Natural killer cell (primary cell): ENCODE measurements at regions of chr20 and their contacts with region 1.

Region 1: DNA sequence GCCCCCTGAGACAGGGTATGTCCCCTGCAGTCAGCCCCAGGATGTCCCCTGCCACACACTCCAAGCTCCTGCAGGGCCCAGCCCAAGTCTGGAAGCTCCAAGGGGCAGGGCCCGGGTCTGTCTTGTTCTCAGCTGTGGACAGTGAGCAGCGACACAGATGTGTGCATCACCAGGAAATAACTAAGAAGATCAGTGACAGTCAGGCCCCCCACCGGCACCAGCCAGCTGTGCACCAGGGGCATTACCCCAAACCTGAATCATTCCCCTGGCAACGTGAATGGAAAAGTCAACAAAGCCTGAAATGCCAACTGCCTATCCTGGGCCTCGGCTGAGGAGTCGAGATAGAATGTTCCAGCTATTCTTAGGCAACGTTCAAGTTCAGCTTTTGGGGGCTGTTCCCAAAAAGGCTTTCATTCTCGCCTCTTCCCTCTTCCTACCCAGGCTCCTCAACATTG is 105.0 kb downstream of the PREX1 start:
- DNase-seq: peak; percentile 23 to 59
- ATAC-seq: peak; percentile 33 to 60 (median 35)
- H3K4me3 ChIP-seq: no peak overlapping the region
- H3K4me3 Mint-ChIP-seq: peak overlapping the region; percentile 70
- H3K27ac ChIP-seq: peak overlapping the region; percentile 74
- H3K27ac Mint-ChIP-seq: peak overlapping the region; percentile 91 to 95
- H3K4me1 ChIP-seq: peaks cover 90% of the 10 kb centered on the region
- H3K4me1 Mint-ChIP-seq: peaks cover 92 to 99% of the 10 kb centered on the region in 2 donors
- H3K27me3 ChIP-seq: no peaks in the 10 kb centered on the region
- H3K27me3 Mint-ChIP-seq: no peaks in the 10 kb centered on the region
- CTCF ChIP-seq: no peak

Region 2: DNA sequence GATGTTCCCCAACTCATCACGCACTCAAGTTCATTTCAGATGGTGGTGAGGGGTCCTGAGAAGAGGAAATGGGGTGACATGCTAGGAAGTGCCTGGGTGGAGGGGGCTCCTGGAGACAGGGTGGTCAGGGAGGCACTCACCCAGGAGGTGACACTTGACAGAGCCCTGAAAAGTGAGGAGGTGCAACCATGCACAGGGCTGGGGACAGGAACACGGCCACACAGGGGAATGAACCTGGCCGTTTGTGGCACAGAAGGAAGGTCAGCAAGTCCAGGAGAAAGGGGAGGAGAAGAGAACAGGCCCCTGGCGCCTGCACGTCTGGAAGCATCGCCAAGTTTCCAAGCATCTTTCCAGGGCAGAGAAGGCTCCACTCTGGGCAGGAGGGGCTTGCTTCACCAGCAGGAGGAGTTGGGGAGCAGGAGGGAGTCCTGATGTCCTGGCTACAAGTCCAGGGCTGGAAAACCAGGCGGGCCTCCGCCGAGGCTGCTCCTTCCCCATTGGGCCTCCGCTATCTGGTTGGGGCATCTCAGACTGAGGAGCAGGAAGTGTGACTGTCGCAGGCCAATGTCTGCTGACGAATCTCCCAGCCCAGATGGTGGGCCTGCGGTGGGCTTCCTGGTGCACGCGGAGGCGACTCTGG is 317.0 kb before region 1 on chr20:
- intact Hi-C with region 1: no loop called
- DNase-seq: no peak
- ATAC-seq: no peak
- H3K4me3 ChIP-seq: no peak overlapping the region
- H3K4me3 Mint-ChIP-seq: no peak overlapping the region
- H3K27ac ChIP-seq: no peak overlapping the region
- H3K27ac Mint-ChIP-seq: no peak overlapping the region
- H3K4me1 ChIP-seq: no peaks in the 10 kb centered on the region
- H3K4me1 Mint-ChIP-seq: no peaks in the 10 kb centered on the region
- H3K27me3 ChIP-seq: no peaks in the 10 kb centered on the region
- H3K27me3 Mint-ChIP-seq: peaks cover 14 to 37% of the 10 kb centered on the region in 2 donors
- CTCF ChIP-seq: no peak

Region 3: GRCh38 chr20:48657475-48658470 is 65.0 kb before region 1 on chr20:
- intact Hi-C with region 1: loop called (anchors 5 kb)
- DNase-seq: peak; percentile 61 to 89
- ATAC-seq: peak; percentile 89 to 97 (median 90)
- H3K4me3 ChIP-seq: no peak overlapping the region
- H3K4me3 Mint-ChIP-seq: peak overlapping the region; percentile 22
- H3K27ac ChIP-seq: no peak overlapping the region
- H3K27ac Mint-ChIP-seq: peak overlapping the region; percentile 79 to 83
- H3K4me1 ChIP-seq: peaks cover 18% of the 10 kb centered on the region
- H3K4me1 Mint-ChIP-seq: peaks cover 44 to 59% of the 10 kb centered on the region in 2 donors
- H3K27me3 ChIP-seq: no peaks in the 10 kb centered on the region
- H3K27me3 Mint-ChIP-seq: no peaks in the 10 kb centered on the region
- CTCF ChIP-seq: peak; percentile 95

Region 4: DNA sequence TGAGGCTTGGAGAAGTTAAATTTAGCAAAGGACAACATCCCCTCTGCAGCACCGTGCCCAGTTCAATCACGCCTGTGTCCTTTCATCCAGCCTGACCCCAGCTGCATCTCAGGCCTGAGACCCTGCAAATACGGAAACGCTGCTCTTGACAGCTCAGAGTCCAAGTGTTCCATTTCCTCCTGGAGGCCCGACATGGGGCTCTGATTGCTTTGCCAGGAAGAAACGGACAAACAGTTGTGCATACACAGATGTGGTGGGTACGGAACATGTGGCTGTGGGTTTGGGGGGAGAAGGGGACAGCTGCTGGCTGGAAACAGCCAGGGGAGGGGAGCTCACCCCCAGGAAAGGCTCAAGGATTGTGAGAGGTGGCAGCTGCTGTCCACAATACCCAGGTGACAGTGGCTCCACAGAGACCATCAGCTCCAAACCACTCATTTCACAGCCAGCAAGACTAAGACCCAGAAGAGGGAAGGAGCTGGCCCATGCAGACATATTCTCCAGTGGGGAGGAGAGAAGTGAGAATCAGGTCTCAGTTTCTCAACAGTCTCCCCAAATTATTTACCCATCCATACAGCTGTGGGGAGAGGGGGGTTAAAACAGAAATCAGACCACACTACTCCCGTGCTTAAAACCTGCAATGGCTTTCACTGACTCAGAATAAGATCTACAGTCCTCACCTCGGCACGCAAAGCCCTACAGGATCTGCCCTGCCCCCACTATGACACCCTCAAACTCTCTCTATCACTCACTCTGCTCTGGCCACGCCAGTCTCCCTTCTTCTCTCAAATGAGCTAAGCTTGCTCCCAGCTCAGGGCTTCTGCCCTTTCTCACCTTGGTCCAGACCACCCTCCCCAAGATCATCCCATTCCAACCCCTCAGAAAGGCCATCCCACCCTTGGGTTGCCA is 15.9 kb after region 1 on chr20:
- intact Hi-C with region 1: loop called (anchors 1 kb)
- DNase-seq: peak; percentile 63 to 64
- ATAC-seq: peak; percentile 81 to 86 (median 85)
- H3K4me3 ChIP-seq: no peak overlapping the region
- H3K4me3 Mint-ChIP-seq: peak overlapping the region; percentile 83
- H3K27ac ChIP-seq: peak overlapping the region; percentile 13
- H3K27ac Mint-ChIP-seq: peak overlapping the region; percentile 89 to 91
- H3K4me1 ChIP-seq: peaks cover 61% of the 10 kb centered on the region
- H3K4me1 Mint-ChIP-seq: peaks cover 69 to 73% of the 10 kb centered on the region in 2 donors
- H3K27me3 ChIP-seq: no peaks in the 10 kb centered on the region
- H3K27me3 Mint-ChIP-seq: no peaks in the 10 kb centered on the region
- CTCF ChIP-seq: no peak

Region 5: GRCh38 chr20:48760403-48760983 is 37.7 kb after region 1 on chr20:
- intact Hi-C with region 1: loop called (anchors 1 kb)
- DNase-seq: peak; percentile 65 to 89
- ATAC-seq: peak; percentile 61 to 83 (median 74)
- H3K4me3 ChIP-seq: peak overlapping the region; percentile 17
- H3K4me3 Mint-ChIP-seq: peak overlapping the region; percentile 86
- H3K27ac ChIP-seq: peak overlapping the region; percentile 87
- H3K27ac Mint-ChIP-seq: no peak overlapping the region
- H3K4me1 ChIP-seq: peaks cover 95% of the 10 kb centered on the region
- H3K4me1 Mint-ChIP-seq: peaks cover 97 to 100% of the 10 kb centered on the region in 2 donors
- H3K27me3 ChIP-seq: no peaks in the 10 kb centered on the region
- H3K27me3 Mint-ChIP-seq: no peaks in the 10 kb centered on the region
- CTCF ChIP-seq: no peak

Region 6: DNA sequence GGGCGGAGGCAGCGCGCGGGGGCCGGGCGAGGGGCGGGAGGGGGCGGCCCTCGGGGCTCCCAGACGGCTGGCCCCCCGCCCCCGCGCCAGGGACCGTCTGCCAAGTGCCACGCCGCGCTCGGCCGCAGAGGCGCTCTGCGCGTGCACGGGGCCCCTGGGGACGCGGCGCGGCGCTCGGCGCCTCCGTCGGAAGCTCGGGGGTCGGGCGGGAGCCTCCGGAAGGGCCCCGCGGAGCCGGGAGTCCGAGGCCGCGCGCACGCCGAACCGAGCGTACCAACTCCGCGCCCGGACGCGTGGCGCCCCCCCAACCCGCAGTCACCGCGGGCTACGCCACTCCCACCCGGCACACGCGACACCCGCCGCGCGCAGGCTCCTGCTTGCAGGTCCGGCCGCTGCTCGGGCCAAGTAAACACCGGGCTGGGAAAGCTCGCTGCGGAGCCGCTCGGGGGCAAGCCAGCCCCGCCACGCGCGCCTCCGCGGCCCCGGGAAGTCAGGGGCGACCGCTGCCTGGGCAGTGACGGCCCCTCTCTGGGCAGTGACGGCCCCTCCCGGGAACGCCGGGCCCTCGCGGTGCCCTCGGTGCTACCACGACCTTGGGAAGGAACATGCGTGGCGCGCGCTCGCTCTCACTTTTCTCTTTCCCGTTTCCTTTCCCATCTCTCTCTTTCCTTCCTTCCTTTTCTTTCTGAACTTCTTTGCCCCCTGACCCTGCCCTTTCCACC is 105.4 kb after region 1 on chr20:
- intact Hi-C with region 1: loop called (anchors 2 kb)
- DNase-seq: peak; percentile 89 to 91
- ATAC-seq: peak; percentile 66 to 89 (median 77)
- H3K4me3 ChIP-seq: peak overlapping the region; percentile 23
- H3K4me3 Mint-ChIP-seq: peak overlapping the region; percentile 91
- H3K27ac ChIP-seq: peak overlapping the region; percentile 43
- H3K27ac Mint-ChIP-seq: peak overlapping the region; percentile 81 to 86
- H3K4me1 ChIP-seq: peaks cover 46% of the 10 kb centered on the region
- H3K4me1 Mint-ChIP-seq: peaks cover 32 to 47% of the 10 kb centered on the region in 2 donors
- H3K27me3 ChIP-seq: no peaks in the 10 kb centered on the region
- H3K27me3 Mint-ChIP-seq: no peaks in the 10 kb centered on the region
- CTCF ChIP-seq: no peak

Region 7: DNA sequence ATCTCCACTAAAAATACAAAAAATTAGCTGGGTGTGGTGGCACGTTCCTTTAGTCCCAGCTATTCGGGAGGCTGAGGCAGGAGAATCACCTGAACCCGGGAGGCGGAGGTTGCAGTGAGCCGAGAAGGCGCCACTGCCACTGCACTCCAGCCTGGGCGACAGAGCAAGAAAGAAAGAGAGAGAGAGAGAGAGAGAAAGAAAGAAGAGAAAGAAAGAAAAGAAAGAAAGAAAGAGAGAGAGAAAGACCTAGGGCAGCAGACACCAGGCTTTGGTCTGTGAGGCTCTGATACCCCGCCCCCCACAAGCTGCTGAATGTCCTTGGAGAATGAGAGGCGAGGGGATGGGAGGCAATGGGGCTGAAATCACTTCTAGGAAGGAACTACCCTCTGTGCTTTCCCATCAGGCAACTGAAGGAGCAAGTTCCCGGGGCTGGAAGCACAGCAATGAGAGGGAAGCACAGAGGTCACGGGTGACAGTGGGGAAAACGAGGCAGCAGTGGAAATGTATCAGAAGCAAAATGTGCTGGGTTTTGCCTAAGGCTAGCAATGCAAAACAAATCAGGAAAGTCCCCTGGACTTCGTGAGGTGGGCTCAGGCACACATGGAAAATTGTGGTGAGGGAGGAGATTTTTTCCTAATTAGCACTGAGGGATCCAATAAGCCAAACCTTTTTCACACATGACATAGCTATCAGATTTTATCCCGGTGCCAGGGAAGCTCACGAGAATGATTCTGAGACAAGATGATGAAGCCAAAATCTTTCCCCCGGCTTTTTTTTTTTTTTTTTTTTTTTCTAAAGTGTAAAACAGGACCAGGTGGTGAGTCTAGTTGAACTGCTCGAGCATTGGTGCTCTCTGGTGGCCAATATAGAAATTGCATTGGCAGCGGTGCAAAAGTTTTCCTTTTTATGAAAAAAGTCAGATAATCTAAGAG is 181.9 kb after region 1 on chr20:
- intact Hi-C with region 1: loop called (anchors 5 kb)
- DNase-seq: peak; percentile 60 to 82
- ATAC-seq: peak; percentile 67 to 79 (median 72)
- H3K4me3 ChIP-seq: no peak overlapping the region
- H3K4me3 Mint-ChIP-seq: no peak overlapping the region
- H3K27ac ChIP-seq: no peak overlapping the region
- H3K27ac Mint-ChIP-seq: peak overlapping the region in 1 of 2 donors; percentile 65
- H3K4me1 ChIP-seq: peaks cover 19% of the 10 kb centered on the region
- H3K4me1 Mint-ChIP-seq: peaks cover 30 to 42% of the 10 kb centered on the region in 2 donors
- H3K27me3 ChIP-seq: no peaks in the 10 kb centered on the region
- H3K27me3 Mint-ChIP-seq: no peaks in the 10 kb centered on the region
- CTCF ChIP-seq: peak; percentile 87